CD4-positive, alpha-beta memory T cell (primary cell): ENCODE measurements at regions of chr3 and their contacts with region 1.

Region 1: DNA sequence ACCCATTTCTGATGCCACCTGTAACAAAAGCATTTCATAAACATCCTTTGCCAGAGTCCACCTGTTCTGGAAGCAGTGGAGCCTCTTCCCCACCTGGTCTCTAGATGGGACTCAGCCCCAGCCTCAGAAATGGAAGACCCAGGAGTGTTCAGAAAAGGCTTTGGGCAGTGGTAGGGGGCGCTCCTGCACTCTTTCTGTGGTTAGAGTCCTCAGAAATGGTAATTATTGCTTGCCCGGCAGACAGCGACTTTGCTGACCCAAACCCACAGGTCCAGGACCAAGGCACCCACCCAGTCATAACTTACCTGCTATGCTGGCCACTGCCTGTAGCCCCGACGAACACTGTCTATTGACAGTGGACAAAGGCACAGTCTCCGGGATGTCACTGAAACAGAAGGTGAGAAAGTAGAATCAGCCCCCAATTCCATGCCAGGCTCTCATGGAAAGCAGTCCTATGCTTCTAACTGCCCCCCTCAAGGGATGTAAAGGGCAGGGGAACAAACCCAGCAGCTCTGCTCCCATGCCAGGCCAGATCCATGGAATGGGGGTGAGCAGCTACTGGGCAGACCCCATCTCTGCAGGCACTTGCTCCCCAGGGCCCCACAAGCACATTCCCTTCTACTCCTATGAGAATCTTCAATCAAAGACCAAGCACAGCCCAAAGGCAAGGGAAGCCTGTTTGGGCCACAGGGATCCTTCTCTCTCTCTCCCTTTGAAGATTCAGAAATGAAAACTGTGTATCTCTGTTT is 5.1 kb downstream of the ACAA1 start:
- DNase-seq: peak in 1 of 5 donors; percentile 12
- H3K4me3 ChIP-seq: no peak overlapping the region
- H3K4me3 Mint-ChIP-seq: no peak overlapping the region
- H3K27ac ChIP-seq: no peak overlapping the region
- H3K27ac Mint-ChIP-seq: peak overlapping the region; percentile 19 to 80 (median 48)
- H3K4me1 ChIP-seq: peaks cover 48% of the 10 kb centered on the region
- H3K4me1 Mint-ChIP-seq: peaks cover 26 to 55% (median 34%) of the 10 kb centered on the region in 4 donors
- H3K27me3 ChIP-seq: no peaks in the 10 kb centered on the region
- H3K27me3 Mint-ChIP-seq: no peaks in the 10 kb centered on the region

Region 2: DNA sequence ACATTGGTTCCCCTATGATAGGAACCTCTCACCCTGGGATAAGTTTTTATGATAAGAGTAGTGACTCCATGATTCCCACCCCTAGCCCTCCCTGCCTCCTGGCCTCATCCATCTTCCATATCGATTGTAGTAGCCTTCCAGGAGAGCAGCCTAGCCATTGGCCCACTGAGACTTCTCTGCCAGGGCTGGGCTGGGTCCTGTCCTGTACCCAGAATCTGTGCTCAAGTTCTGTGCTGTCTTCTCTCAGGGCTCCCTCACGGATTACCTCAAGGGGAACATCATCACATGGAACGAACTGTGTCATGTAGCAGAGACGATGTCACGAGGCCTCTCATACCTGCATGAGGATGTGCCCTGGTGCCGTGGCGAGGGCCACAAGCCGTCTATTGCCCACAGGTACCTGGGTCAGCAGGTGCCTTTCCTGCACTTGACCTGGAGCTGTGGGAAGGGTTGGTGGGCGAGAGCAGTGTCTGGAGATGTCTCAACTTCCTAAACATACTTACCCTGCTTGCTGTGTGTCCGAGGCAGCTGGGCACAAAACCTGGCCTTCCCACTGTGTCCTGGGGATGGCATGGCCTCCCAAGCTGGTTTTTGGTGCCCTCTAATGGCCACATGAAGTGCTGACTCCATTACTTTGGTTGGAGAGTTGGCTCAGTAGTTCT is 347.8 kb after region 1 on chr3:
- CTCF ChIA-PET with region 1: no interaction called
- POLR2A ChIA-PET with region 1: interaction called, 3 read pairs
- intact Hi-C with region 1: loop called (anchors 5 kb)
- DNase-seq: peak in 4 of 5 donors; percentile 46 to 58 (median 48)
- H3K4me3 ChIP-seq: no peak overlapping the region
- H3K4me3 Mint-ChIP-seq: no peak overlapping the region
- H3K27ac ChIP-seq: no peak overlapping the region
- H3K27ac Mint-ChIP-seq: peak overlapping the region in 2 of 7 donors; percentile 3 to 9
- H3K4me1 ChIP-seq: no peaks in the 10 kb centered on the region
- H3K4me1 Mint-ChIP-seq: peaks cover 0 to 12% (median 3%) of the 10 kb centered on the region in 4 donors
- H3K27me3 ChIP-seq: no peaks in the 10 kb centered on the region
- H3K27me3 Mint-ChIP-seq: no peaks in the 10 kb centered on the region